Activated B cell treated with CpG ODN at 0.5 μM for 24 hours (primary cell): ENCODE measurements at regions of chr2 and their contacts with region 1.

Region 1: DNA sequence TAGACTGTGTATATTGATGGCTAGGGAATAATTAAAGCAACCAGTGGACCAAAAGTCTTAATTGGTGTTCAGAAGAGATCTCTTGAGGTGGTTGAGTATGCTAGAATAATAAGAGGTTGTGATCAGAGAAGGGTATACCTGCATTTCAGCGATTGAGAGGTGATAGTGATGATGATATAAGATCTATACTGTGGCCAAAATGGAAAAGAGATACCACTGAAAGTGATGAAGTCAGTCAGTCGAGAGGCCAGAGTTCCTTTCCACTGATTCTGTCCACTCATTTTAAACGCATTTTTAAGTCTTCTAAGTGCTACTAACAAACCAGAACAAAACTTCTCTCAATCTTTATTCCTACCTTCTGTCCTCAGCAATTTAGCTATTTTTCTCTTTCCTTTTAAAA is 32.9 kb downstream of the ACTR3 start:
- DNase-seq: no peak
- ATAC-seq: no peak
- H3K4me3 Mint-ChIP-seq: no peak overlapping the region
- H3K27ac Mint-ChIP-seq: no peak overlapping the region
- H3K4me1 Mint-ChIP-seq: peaks cover 26% of the 10 kb centered on the region
- H3K27me3 Mint-ChIP-seq: no peaks in the 10 kb centered on the region
- CTCF ChIP-seq: no peak

Region 2: GRCh38 chr2:113858764-113859163 is 64.0 kb before region 1 on chr2:
- CTCF ChIA-PET with region 1: no interaction called
- POLR2A ChIA-PET with region 1: no interaction called
- intact Hi-C with region 1: loop called (anchors 1 kb)
- DNase-seq: no peak
- ATAC-seq: no peak
- H3K4me3 Mint-ChIP-seq: peak overlapping the region; percentile 76
- H3K27ac Mint-ChIP-seq: peak overlapping the region; percentile 93
- H3K4me1 Mint-ChIP-seq: peaks cover 93% of the 10 kb centered on the region
- H3K27me3 Mint-ChIP-seq: no peaks in the 10 kb centered on the region
- CTCF ChIP-seq: no peak

Region 3: GRCh38 chr2:113889471-113890252 is 33.1 kb before region 1 on chr2 and contains the start of gene ACTR3:
- CTCF ChIA-PET with region 1: interaction called, 3 read pairs
- POLR2A ChIA-PET with region 1: interaction called, 5 read pairs
- intact Hi-C with region 1: loop called (anchors 1 kb)
- DNase-seq: peak; percentile 96
- ATAC-seq: peak; percentile 79
- H3K4me3 Mint-ChIP-seq: peak within 1 kb of the TSS; percentile 98
- H3K27ac Mint-ChIP-seq: peak within 1 kb of the TSS; percentile 99
- H3K4me1 Mint-ChIP-seq: peaks cover 84% of the 10 kb centered on the region
- H3K27me3 Mint-ChIP-seq: no peaks in the 10 kb centered on the region
- CTCF ChIP-seq: no peak
- total RNA-seq, gene ACTR3: 638 and 639 TPM in 2 replicates

Region 4: DNA sequence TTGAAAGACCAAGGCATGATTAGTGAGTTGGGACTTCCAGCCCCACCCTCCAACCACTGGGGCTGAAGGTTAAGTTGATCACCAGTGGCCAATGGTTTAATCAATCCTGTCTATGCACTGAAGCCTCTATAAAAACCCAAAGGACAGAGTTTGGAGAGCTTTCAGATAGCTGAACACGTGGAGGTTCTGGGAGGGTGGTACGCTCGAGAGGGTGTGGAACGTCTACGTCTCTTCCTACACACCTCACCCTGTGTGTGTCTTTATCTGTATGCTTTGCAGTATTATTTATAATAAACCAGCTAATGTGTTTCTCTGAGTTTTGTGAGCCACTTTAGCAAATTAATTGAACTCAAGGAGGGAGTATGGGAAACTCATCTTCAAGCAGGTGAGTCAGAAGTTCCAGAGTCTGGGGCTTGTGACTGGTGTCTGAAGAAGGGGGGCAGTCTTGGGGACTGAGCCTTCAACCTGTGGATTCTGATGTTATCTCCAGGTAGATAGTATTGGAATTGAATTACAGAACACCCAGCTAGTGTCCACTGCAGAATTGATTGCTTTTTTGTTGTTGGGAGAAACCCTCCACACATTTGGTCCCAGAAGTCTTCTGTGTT is 12.6 kb before region 1 on chr2:
- CTCF ChIA-PET with region 1: no interaction called
- POLR2A ChIA-PET with region 1: interaction called, 3 read pairs
- intact Hi-C with region 1: loop called (anchors 1 kb)
- DNase-seq: no peak
- ATAC-seq: peak; percentile 66
- H3K4me3 Mint-ChIP-seq: peak overlapping the region; percentile 29
- H3K27ac Mint-ChIP-seq: peak overlapping the region; percentile 75
- H3K4me1 Mint-ChIP-seq: peaks cover 79% of the 10 kb centered on the region
- H3K27me3 Mint-ChIP-seq: no peaks in the 10 kb centered on the region
- CTCF ChIP-seq: no peak

Region 5: DNA sequence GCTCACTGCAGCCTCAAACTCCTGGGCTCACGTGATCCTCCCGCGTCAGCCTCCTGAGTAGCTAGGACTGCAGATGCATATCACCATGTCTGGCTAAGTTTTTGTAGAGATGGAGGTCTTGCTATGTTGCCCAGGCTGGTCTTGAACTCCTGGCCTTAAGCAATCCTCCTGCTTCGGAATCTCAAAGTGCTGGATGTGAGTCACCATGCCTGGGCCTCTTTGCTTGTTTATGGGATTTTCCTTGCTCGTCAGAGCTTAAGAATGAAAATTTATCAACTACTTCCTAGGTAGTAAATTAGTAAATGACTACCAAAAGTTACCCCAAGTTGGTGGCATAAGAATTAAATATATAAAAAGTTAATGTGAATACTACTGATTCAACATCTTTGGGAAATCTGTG is 18.1 kb after region 1 on chr2:
- CTCF ChIA-PET with region 1: no interaction called
- POLR2A ChIA-PET with region 1: no interaction called
- intact Hi-C with region 1: loop called (anchors 2 kb)
- DNase-seq: no peak
- ATAC-seq: no peak
- H3K4me3 Mint-ChIP-seq: no peak overlapping the region
- H3K27ac Mint-ChIP-seq: no peak overlapping the region
- H3K4me1 Mint-ChIP-seq: peaks cover 3% of the 10 kb centered on the region
- H3K27me3 Mint-ChIP-seq: no peaks in the 10 kb centered on the region
- CTCF ChIP-seq: no peak

Region 6: GRCh38 chr2:113959202-113959601 is 36.4 kb after region 1 on chr2:
- CTCF ChIA-PET with region 1: no interaction called
- POLR2A ChIA-PET with region 1: no interaction called
- intact Hi-C with region 1: loop called (anchors 5 kb)
- DNase-seq: no peak
- ATAC-seq: no peak
- H3K4me3 Mint-ChIP-seq: no peak overlapping the region
- H3K27ac Mint-ChIP-seq: no peak overlapping the region
- H3K4me1 Mint-ChIP-seq: no peaks in the 10 kb centered on the region
- H3K27me3 Mint-ChIP-seq: no peaks in the 10 kb centered on the region
- CTCF ChIP-seq: no peak